Heart right ventricle (tissue), 16 donors: ENCODE measurements at regions of chr14 and their contacts with region 1.

Region 1: DNA sequence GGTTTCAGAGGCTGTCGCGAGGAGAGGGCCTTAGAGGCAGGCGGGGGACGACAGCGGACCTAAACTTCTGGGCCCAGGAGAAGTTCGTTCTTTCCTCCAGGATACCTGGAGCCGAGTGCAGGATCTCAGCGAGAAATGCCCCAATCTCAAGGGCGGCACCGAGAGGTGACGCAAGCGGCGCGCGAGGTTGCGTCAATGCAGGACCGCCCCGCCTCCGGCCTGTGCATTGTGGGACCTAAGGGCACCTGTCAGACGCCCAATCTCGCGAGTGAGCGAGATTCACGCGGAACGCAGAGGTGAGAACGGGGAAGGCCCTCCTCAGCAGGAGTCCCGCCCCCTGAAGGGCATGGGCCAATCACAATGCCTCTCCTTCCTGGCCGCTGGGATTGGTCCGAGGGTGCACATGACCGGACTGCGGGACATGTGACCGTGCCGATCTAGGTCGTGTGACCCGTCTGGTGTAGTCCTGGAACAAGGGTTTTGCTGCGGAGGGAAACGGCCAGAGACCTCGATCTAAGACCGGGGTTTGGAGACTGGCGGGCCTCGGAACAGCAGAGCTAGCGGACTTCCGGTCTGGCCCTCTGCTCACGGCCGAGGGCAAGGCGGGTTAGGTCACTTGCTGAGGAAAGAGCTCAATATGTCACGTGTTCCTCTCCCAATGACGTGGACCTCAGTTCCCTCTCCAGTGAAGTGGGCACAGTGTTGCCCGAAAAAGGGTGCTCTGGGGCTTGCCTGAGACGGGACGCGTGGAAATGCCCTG is 16.3 kb upstream of the DYNC1H1 start:
- DNase-seq: peak; percentile 100
- ATAC-seq: peak; percentile 98 to 99 (median 99)
- H3K4me3 ChIP-seq: peak overlapping the region; percentile 57 to 98 (median 78)
- H3K27ac ChIP-seq: peak overlapping the region; percentile 84 to 100 (median 96)
- H3K4me1 ChIP-seq: peaks cover 3 to 29% (median 20%) of the 10 kb centered on the region in 9 donors
- H3K27me3 ChIP-seq: peaks cover 0 to 25% (median 0%) of the 10 kb centered on the region in 7 donors
- CTCF ChIP-seq: no peak

Region 2: DNA sequence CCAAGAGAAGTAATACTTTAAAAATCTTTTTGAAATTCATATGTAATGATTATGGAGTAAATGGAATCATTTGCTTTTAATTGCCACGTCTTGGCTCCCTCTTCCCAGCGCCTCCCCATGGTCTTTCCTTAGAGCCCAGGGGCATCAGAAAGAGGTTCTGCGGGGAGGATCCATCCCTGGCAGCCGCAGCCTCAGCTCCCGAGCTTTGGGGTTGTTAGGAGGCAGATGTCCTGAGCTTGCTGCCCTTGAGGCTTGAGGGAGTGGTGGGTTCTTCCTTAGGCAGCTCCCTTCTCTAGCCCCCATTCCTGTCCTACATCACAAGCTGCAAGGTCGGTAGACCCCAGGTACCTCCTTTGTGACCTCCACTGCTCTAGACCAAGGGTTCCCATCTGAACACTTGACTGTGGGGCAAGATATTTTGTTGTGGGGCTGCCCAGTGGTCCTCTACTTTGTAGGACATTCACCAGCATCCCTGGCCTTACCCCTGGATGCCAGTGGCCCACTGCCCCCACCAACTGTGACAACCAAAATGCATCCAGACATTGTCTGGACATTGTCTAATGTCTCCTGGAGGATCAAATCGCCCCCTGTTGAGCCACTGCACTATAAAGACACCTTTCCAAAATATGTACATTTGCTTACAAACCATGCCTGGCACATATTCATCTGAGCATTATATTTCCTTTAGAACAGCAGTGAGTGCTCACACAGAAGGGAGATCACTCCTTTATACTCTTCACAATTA is 180.3 kb before region 1 on chr14:
- intact Hi-C with region 1: loop called in 7 of 10 experiments (anchors 5 to 10 kb)
- DNase-seq: no peak
- ATAC-seq: no peak
- H3K4me3 ChIP-seq: no peak overlapping the region
- H3K27ac ChIP-seq: no peak overlapping the region
- H3K4me1 ChIP-seq: peaks cover 0 to 23% (median 6%) of the 10 kb centered on the region in 9 donors
- H3K27me3 ChIP-seq: no peaks in the 10 kb centered on the region
- CTCF ChIP-seq: no peak

Region 3: DNA sequence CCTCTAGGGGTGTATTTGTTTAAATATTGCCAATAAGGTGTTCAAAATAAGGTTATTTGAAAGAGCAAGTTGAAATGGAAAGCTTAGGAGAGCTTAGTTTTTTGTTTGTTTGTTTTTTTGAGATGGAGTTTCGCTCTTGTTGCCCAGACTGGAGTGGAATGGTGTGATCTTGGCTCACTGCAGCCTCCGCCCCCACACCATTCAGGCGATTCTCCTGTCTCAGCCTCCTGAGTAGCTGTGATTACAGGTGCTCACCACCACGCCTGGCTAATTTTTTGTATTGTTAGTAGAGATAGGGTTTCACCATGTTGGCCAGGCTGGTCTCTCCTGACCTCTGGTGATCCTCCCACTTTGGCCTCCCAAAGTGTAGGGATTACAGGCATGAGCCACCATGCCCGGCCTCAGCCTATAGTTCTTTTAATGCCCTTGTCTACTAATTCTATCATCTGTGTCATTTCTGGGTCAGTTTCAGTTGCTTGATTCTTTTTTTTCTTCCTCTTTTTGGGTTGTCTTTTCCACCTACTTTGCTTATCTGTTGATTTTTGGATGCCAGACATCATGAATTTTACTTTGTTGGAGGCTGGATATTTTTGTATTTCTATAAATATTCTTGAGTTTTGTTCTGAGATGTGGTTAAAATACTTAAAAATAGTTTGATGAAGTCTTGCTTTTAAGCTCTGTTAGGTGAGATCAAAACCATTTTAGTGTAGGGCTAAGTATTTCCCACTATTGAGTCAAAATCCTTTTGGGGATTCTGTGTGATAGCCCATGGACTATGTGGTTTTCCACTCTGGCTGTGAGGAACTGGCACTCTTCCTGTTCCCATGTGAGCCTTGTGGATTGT is 663.1 kb after region 1 on chr14:
- intact Hi-C with region 1: no loop called
- DNase-seq: no peak
- ATAC-seq: no peak
- H3K4me3 ChIP-seq: no peak overlapping the region
- H3K27ac ChIP-seq: no peak overlapping the region
- H3K4me1 ChIP-seq: peaks cover 0 to 16% (median 8%) of the 10 kb centered on the region in 9 donors
- H3K27me3 ChIP-seq: no peaks in the 10 kb centered on the region
- CTCF ChIP-seq: no peak